Gastrocnemius medialis (tissue), 4 donors: ENCODE measurements at regions of chr5 and their contacts with region 1.

Region 1: DNA sequence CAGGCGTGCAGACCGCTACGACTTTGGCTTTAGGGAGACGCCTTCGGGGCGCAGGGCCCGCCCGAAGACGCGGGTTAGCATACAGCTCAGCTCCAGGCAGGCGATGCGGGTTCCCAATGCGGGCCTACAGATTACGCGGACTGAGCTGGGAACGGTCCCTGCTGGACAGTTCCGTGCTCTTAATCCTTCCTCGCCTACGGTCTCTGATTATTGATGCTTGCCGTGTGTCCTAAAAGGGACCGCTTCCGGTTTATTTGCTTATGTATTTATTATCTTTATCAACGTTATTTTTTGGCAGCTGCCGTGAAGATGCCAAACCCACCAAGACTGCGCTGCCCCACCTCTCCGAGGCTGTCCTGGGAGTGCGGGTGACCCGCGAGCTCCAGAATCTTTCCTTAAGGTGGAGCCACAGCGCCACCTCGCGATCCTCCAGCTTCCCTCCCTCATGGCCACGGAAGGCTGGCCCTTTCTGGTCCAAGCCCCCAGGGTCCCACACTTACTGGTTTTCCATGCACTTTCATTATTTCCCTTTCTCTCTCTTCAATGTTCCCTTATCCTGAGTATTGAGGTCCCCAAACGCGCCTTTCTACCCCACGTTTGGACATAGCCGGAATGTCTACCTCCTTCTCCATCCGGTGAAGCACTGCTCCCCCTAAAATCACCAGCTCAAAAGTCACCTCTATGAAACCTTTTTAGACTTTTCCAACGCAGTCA is 7.0 kb upstream of the EBF1 start:
- DNase-seq: peak in 1 of 2 donors; percentile 40
- ATAC-seq: peak; percentile 71 to 75
- H3K4me3 ChIP-seq: peak overlapping the region; percentile 30 to 53 (median 42)
- H3K27ac ChIP-seq: peak overlapping the region in 1 of 4 donors; percentile 29
- H3K4me1 ChIP-seq: no peaks in the 10 kb centered on the region
- H3K27me3 ChIP-seq: peaks cover 34 to 50% (median 39%) of the 10 kb centered on the region in 3 donors
- CTCF ChIP-seq: peak; percentile 76 to 85 (median 82)
- POLR2A ChIP-seq: no peak

Region 2: DNA sequence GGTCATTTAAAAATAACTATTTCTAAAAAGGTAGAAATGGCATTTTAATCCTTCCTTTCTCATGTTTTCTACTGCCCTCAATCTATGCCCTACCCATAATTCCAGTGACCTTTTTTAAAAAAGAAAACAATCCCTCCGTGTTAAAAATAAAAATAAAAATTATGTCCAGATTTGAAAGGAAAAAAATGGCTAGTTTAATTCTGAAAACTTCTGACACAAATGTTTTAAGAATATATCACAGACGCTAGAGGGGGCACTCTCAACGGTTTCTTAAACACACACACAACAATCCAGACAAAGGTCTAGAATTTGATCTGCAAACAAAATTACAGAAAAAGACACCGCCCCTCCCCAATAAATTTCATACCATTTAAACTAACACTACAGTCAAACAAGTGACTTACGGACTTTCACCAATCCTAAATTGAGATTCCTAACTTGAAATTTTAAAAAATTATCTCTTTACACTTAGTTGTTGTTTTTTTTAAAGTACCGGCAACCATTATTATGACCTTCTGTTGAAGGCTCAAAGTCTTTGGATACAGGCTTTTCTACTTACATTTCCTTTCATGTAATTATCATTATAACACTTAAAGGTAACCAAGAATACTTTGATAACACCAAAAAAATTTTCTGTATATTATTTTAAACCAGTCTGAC is 1286.0 kb before region 1 on chr5:
- in situ Hi-C with region 1: loop called in 1 of 4 experiments (anchors 25 kb)
- intact Hi-C with region 1: loop called (anchors 10 kb)
- DNase-seq: no peak
- ATAC-seq: no peak
- H3K4me3 ChIP-seq: no peak overlapping the region
- H3K27ac ChIP-seq: peak overlapping the region; percentile 39 to 55 (median 46)
- H3K4me1 ChIP-seq: peaks cover 34 to 41% of the 10 kb centered on the region in 2 donors
- H3K27me3 ChIP-seq: no peaks in the 10 kb centered on the region
- CTCF ChIP-seq: peak in 3 of 5 experiments; percentile 28 to 54 (median 44)
- POLR2A ChIP-seq: no peak

Region 3: DNA sequence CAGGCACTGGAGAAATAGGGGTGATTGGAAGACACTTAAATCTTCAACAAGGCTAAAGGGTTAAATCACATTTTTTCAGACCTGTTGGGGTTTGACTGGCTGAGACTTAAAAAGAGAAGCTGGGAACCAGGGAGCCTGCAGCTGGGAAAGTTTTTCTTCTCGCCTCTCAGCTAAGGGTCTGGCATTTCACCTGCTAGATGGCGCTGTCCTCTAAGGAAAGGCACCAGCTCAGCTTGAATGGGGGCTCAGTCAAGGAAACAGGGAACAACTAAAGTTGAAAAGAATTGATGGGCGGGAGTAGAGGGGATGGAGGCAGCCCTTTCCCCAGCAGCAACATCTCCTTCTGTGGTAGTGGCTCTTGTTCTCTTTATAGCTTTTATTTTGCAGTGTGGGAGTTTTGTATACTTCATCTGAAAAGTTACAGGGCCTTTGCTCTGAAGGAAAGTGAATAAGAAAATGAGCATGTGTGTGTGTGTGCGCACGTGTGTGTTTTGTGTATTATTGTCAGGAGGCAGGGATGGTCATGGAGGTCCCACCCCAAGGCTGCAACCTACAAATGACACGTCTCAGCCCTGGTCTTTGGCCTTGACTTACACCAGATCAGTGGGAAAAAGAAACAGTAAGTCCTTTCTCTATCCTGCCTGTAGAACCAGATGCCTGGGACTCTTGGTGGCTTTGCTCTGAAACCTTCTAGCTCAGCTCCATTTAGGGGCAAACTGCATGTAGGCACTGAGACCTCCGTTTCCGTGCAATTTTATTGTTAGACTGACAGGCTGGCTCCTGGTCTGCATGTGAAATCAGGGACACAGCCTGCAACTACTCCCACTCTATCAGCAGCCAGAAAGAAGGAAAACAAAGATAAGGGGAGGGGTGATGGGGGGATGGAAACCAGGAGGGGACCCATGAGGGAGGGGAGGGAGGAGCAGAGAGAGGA is 931.5 kb before region 1 on chr5:
- in situ Hi-C with region 1: loop called in 3 of 4 experiments (anchors 10 kb)
- intact Hi-C with region 1: loop called (anchors 2 kb)
- DNase-seq: peak; percentile 38 to 42
- ATAC-seq: peak; percentile 43 to 61
- H3K4me3 ChIP-seq: no peak overlapping the region
- H3K27ac ChIP-seq: no peak overlapping the region
- H3K4me1 ChIP-seq: no peaks in the 10 kb centered on the region
- H3K27me3 ChIP-seq: no peaks in the 10 kb centered on the region
- CTCF ChIP-seq: peak; percentile 36 to 66 (median 56)
- POLR2A ChIP-seq: no peak

Region 4: GRCh38 chr5:158463938-158464337 is 642.8 kb before region 1 on chr5:
- in situ Hi-C with region 1: loop called in 1 of 4 experiments (anchors 25 kb)
- intact Hi-C with region 1: loop called (anchors 10 kb)
- DNase-seq: peak; percentile 30 to 70
- ATAC-seq: peak; percentile 57 to 67
- H3K4me3 ChIP-seq: no peak overlapping the region
- H3K27ac ChIP-seq: peak overlapping the region in 3 of 4 donors; percentile 36 to 59 (median 49)
- H3K4me1 ChIP-seq: peaks cover 7 to 10% of the 10 kb centered on the region in 2 donors
- H3K27me3 ChIP-seq: no peaks in the 10 kb centered on the region
- CTCF ChIP-seq: no peak
- POLR2A ChIP-seq: no peak

Region 5: DNA sequence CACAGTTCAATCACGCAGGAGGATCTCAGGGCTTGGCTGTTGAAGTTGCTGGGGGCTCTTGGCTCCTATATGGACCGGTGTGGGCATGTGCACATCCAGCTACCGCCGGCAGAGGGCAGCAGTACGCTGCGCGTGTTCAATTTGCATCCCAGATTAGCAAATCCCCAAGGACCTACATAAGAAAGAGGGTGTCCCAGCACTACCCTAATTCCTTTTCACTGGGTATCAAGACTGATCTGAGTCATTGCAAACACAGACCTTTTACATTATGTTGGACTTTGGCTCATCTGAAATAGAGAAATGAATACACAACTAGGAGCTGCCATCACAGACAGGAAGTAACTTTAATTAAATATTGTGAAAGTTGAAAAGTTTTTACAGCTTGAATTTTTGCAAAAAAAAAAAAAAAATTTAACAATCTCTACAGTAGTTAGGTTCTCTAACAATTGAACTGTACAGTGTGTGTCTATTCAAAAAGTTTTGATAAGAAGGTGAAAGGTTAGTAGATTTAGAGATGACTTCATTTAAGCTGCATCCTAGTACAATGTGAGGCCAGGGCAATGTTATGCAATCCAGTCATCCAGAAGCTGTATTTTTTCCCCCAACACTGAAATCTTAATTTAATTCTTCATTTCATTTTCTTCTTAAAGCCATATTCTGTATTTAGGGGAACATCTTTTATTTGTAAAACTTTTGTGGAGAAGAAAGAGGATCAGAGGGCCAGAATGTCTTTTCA is 411.0 kb before region 1 on chr5:
- in situ Hi-C with region 1: loop called (anchors 5 to 10 kb)
- intact Hi-C with region 1: loop called (anchors 1 kb)
- DNase-seq: peak; percentile 32 to 49
- ATAC-seq: peak; percentile 67 to 73
- H3K4me3 ChIP-seq: no peak overlapping the region
- H3K27ac ChIP-seq: peak overlapping the region in 1 of 4 donors; percentile 23
- H3K4me1 ChIP-seq: peaks cover under 1 to 1% of the 10 kb centered on the region in 2 donors
- H3K27me3 ChIP-seq: no peaks in the 10 kb centered on the region
- CTCF ChIP-seq: peak; percentile 87 to 96 (median 89)
- POLR2A ChIP-seq: no peak